PC-3 (cell line): ENCODE measurements at regions of chr12 and their contacts with region 1.

Region 1: GRCh38 chr12:53079226-53080117 is at the start of gene SPRYD3:
- DNase-seq: peak; percentile 97
- ATAC-seq: peak; percentile 96
- H3K4me3 ChIP-seq: peak within 1 kb of the TSS; percentile 76
- H3K27ac ChIP-seq: peak within 1 kb of the TSS; percentile 62
- H3K4me1 ChIP-seq: peaks cover 16% of the 10 kb centered on the region
- H3K27me3 ChIP-seq: no peaks in the 10 kb centered on the region
- CTCF ChIP-seq: no peak
- total RNA-seq, gene SPRYD3: 18.5 and 24.1 TPM in 2 replicates

Region 2: GRCh38 chr12:51793201-51793600 is 1286.3 kb before region 1 on chr12:
- CTCF ChIA-PET with region 1: no interaction called
- POLR2A ChIA-PET with region 1: interaction called, 11 read pairs
- intact Hi-C with region 1: no loop called
- DNase-seq: peak; percentile 8
- ATAC-seq: no peak
- H3K4me3 ChIP-seq: no peak overlapping the region
- H3K27ac ChIP-seq: no peak overlapping the region
- H3K4me1 ChIP-seq: no peaks in the 10 kb centered on the region
- H3K27me3 ChIP-seq: no peaks in the 10 kb centered on the region
- CTCF ChIP-seq: no peak

Region 3: DNA sequence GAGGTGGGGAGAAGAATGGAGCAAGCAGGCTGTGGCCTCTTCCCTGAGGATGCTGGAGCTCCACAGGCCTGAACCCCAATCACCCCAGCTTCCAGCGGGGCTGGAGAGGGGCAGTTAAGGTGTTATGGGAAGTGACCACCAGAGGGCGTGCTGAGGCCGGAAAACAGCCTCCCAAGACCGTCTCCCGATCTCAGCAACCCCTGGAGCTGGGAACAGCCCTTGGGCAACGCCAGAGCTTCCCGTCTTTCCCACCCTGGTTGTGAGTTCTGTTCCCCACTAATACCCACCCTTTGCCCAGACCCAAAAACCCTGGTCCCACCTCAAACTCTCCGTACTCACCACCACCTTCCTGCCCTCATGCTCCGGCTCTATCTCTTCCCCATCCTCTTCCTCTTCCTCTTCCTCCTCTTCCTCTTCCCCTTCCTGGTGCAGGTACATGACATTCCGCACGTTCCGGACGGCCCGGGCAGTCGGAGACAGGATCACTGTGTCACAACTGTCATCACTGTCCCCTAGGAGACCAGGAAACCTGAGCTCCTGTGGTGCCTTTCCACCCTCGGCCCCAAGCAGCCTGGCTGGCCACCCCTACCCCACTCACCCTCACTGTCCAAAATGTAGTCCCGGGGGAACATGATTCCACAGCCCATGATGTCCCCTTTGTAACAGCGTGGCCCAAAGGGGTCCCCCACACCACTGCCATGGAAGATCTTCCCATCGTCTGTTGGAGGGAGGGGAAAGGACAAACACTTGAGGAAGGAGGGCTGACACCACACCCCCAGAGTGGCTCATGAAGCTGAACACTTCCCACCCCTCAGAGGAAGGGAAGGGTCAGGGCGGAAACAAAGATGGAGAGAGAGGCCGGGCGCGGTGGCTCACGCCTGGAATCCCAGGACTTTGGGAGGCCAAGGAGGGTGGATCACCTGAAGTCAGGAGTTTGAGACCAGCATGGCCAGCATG is 13.2 kb before region 1 on chr12:
- CTCF ChIA-PET with region 1: interaction called, 17 read pairs
- POLR2A ChIA-PET with region 1: interaction called, 7 read pairs
- intact Hi-C with region 1: no loop called
- DNase-seq: peak; percentile 81
- ATAC-seq: peak; percentile 53
- H3K4me3 ChIP-seq: no peak overlapping the region
- H3K27ac ChIP-seq: no peak overlapping the region
- H3K4me1 ChIP-seq: peaks cover 26% of the 10 kb centered on the region
- H3K27me3 ChIP-seq: no peaks in the 10 kb centered on the region
- CTCF ChIP-seq: peak; percentile 89

Region 4: DNA sequence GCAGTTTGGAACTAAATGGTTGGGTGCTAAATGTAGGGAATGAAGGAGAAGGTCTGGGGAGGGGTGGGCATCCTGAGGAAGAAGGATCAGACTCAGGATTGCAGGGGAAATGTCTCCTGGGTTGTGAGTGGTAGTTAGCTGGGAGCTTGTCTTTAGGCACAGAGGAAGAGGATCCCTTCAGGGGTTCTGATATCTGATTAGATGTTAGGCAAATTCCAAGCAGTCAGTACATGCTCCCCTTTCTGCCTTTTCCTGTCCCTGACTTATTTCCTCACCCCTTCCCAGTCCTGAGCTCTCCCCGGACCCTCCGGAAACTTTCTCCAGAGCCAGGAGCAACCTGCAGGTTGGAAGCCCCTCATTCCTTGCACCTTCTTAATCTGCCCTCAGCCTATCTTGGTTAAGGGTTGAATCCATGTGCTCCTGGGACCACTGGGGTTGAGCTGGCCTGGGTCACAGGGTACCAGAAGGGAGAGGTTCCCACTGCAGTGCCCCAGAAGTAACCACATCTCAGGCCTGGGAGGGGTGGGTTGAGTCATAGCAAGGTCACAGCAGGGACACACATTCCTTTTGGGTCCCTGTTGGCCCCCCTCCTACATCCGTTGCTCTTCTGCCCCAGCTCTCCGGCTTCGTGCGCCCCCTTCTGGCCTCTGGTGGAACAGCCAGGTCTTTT is 19.6 kb after region 1 on chr12:
- CTCF ChIA-PET with region 1: interaction called, 15 read pairs
- POLR2A ChIA-PET with region 1: interaction called, 19 read pairs
- intact Hi-C with region 1: loop called (anchors 1 kb)
- DNase-seq: peak; percentile 95
- ATAC-seq: peak; percentile 56
- H3K4me3 ChIP-seq: peak overlapping the region; percentile 96
- H3K27ac ChIP-seq: peak overlapping the region; percentile 83
- H3K4me1 ChIP-seq: peaks cover 39% of the 10 kb centered on the region
- H3K27me3 ChIP-seq: no peaks in the 10 kb centered on the region
- CTCF ChIP-seq: peak; percentile 87

Region 5: GRCh38 chr12:53115112-53115890 is 35.8 kb after region 1 on chr12:
- CTCF ChIA-PET with region 1: interaction called, 14 read pairs
- POLR2A ChIA-PET with region 1: no interaction called
- intact Hi-C with region 1: no loop called
- DNase-seq: no peak
- ATAC-seq: no peak
- H3K4me3 ChIP-seq: no peak overlapping the region
- H3K27ac ChIP-seq: no peak overlapping the region
- H3K4me1 ChIP-seq: no peaks in the 10 kb centered on the region
- H3K27me3 ChIP-seq: no peaks in the 10 kb centered on the region
- CTCF ChIP-seq: no peak